Activated CD4-positive, alpha-beta memory T cell treated with anti-CD3 and anti-CD28 coated beads for 36 hours (primary cell): ENCODE measurements at regions of chr18 and their contacts with region 1.

Region 1: GRCh38 chr18:48922801-48923730 is 27.7 kb downstream of the SMAD7 start:
- DNase-seq: peak; percentile 41
- H3K4me3 Mint-ChIP-seq: peak overlapping the region; percentile 60
- H3K27ac Mint-ChIP-seq: peak overlapping the region; percentile 40
- H3K4me1 Mint-ChIP-seq: peaks cover 49% of the 10 kb centered on the region
- H3K27me3 Mint-ChIP-seq: no peaks in the 10 kb centered on the region

Region 2: DNA sequence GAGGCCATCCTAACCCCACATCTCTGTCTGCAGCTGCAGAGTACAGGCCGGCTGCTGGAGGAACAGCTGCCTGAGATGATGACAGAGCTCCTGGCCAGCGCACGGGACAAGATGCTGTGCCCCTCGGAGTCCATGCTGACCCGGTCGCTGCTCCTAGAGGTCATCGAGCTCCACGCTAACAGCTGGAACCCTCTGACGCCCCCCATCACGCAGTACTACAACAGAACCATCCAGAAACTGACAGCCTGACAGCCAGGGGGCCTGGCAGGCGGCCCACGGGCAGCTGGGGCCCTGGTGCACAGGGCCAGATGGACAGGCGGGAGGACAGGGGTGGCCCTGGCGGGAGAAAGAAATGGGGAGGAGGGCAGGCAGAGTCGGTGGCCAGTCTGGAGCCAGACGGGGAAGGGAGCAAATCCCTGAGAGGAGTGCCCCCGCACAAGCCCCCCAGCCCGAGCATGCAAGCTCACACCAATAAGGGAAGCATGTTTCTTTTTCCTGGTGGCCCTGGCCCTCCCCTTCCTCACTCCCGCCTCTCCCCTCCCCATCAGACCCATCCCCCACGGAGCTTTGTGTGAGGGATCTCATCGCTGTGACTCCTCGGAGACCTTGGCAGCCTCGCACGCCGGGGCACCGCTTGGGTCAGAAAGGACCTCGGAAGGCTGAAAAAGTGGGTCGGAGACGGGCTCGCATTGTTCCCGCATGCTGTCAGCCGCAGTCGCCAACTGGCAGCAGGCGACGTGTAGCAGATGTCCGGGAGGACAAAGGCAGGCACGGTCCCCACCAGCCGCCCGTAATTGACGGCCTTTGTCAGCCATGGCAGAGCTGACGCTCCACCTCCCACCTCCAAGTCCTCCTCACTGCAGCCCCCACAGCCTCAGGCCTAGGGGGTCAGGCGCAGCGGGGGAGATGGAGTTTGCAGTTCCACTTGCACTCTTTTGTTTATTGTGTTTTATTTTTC is 63.5 kb before region 1 on chr18:
- CTCF ChIA-PET with region 1: no interaction called
- POLR2A ChIA-PET with region 1: no interaction called
- intact Hi-C with region 1: no loop called
- DNase-seq: no peak
- H3K4me3 Mint-ChIP-seq: no peak overlapping the region
- H3K27ac Mint-ChIP-seq: no peak overlapping the region
- H3K4me1 Mint-ChIP-seq: peaks cover 10% of the 10 kb centered on the region
- H3K27me3 Mint-ChIP-seq: no peaks in the 10 kb centered on the region

Region 3: GRCh38 chr18:48875942-48876511 is 47.0 kb before region 1 on chr18:
- CTCF ChIA-PET with region 1: no interaction called
- POLR2A ChIA-PET with region 1: no interaction called
- intact Hi-C with region 1: no loop called
- DNase-seq: no peak
- H3K4me3 Mint-ChIP-seq: no peak overlapping the region
- H3K27ac Mint-ChIP-seq: no peak overlapping the region
- H3K4me1 Mint-ChIP-seq: peaks cover 18% of the 10 kb centered on the region
- H3K27me3 Mint-ChIP-seq: no peaks in the 10 kb centered on the region

Region 4: DNA sequence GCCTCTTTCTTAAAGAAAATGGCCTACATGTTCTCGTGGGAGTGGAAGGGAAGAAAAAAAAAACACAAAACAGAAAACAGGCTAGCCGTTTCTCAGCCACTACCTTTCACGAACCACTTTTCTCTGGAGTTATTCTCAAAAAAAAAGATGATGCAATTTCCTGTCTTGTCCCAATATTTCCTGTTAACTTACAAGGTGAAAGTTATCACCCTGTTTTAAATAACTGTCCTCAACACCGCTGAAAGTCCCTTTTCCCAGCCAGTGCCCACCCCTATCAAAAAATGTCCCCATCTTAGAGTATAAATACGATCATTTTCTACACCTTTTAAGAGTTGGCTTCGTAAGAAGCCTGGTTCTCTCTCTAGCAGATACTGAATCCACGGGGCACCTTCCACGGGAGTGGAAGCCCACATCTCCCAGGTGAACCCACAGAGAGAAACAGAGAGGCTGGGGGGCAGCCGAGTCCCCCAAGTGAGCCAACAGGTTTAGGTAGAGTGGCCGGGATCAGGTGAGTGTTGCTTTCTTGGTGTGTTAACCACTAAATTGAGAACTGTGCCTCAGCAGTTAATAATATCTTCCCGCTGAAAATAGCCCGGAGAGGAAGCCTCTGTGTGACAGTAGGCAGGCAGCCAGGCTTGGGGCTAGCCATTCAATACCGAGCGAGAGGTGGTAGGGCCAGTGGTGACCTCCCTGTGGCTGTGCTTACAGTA is 11.8 kb after region 1 on chr18:
- CTCF ChIA-PET with region 1: interaction called, 3 read pairs
- POLR2A ChIA-PET with region 1: interaction called, 5 read pairs
- intact Hi-C with region 1: loop called (anchors 1 kb)
- DNase-seq: no peak
- H3K4me3 Mint-ChIP-seq: peak overlapping the region; percentile 40
- H3K27ac Mint-ChIP-seq: peak overlapping the region; percentile 76
- H3K4me1 Mint-ChIP-seq: peaks cover 89% of the 10 kb centered on the region
- H3K27me3 Mint-ChIP-seq: no peaks in the 10 kb centered on the region